Natural killer cell (primary cell): ENCODE measurements at regions of chr2 and their contacts with region 1.

Region 1: DNA sequence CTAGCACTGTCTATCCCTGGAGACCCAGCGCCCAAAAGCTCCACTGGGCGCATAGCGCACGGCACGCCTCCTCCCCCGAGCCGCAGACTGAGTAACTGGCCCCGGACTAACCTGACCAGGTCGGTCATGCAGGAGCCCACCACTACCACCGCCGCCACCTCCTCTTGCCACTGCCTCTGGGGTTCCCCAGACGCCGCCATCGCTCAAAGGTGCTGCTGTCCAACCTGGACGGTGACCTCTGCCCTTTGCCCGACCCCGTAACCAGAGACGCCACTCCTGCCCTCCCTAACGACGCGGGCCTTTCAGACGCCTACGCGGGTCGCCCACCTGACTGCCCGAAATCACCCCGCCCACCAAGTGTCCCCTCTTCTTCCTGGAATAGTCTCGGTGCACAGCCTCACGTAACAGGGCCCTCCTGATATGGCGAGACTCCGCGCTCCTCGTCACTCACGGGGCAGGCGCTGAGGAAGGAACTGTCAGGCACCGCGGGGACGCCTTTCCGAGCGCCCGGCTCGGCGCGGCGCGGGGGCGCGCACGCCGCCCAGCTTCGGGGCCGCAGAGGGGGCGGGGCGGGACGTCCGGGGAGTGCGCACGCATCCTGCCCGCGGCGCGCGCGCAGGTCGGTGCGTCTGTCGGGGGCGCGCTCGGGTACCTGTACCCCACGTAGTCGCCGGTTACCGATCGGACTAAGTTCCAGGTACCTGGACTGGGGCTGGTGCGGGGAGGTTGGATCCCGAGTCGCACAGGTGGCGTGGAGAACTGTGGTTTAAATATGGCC is at the starts of genes BABAM2 and RBKS:
- DNase-seq: peak; percentile 91 to 96
- ATAC-seq: peak; percentile 76 to 90 (median 78)
- H3K4me3 ChIP-seq: peak within 1 kb of the TSS; percentile 87
- H3K4me3 Mint-ChIP-seq: peak within 1 kb of the TSS; percentile 99
- H3K27ac ChIP-seq: peak within 1 kb of the TSS; percentile 100
- H3K27ac Mint-ChIP-seq: peak within 1 kb of the TSS; percentile 100
- H3K4me1 ChIP-seq: peaks cover 17% of the 10 kb centered on the region
- H3K4me1 Mint-ChIP-seq: peaks cover 30 to 41% of the 10 kb centered on the region in 2 donors
- H3K27me3 ChIP-seq: no peaks in the 10 kb centered on the region
- H3K27me3 Mint-ChIP-seq: peaks cover 0 to 4% of the 10 kb centered on the region in 2 donors
- CTCF ChIP-seq: no peak
- total RNA-seq, gene BABAM2: 54.6 to 66.1 (median 59.5) TPM
- total RNA-seq, gene RBKS: 11.5 to 20.9 (median 12.8) TPM

Region 2: DNA sequence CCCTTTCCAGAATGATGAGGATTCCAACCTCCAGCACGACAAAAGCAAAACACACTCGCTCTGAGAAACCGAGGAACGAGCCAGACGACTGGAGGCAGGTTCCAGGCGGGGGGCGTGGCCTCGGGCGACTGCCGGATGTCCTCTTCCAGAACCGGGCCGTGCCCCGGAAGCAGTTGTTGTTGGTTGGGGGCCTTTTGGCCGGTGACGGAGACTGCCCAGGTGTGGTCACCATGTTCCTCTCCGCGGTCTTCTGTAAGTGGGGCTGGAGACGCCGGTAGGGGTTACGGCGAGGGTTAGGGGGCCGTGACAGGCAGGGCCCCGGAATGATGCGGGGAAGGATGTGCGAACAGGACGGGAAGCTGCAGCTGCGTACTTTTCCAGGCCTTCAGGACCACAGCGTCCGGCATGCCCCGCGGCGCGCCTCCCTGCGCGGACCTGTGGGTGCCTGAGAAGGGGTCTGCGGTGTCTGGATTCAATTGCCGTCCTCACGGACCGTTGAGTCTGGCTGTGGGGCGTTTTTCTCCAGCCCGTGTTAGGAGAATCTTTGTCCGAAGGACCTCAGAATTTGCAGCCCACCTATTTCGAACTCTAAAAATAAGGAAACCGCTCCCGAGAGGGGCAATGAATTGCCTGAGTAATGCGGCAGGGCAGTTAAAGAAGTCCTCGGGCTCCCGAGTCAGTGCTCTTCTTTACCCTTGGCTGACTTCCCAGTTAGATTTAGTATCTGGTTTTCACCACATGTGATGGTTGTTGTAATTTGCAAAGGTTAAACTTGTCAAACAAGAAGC is 118.6 kb before region 1 on chr2 and contains the start of gene MRPL33:
- intact Hi-C with region 1: loop called (anchors 1 kb)
- DNase-seq: peak; percentile 87 to 95
- ATAC-seq: peak; percentile 95 to 96 (median 96)
- H3K4me3 ChIP-seq: peak within 1 kb of the TSS; percentile 86
- H3K4me3 Mint-ChIP-seq: peak within 1 kb of the TSS; percentile 99
- H3K27ac ChIP-seq: peak within 1 kb of the TSS; percentile 83
- H3K27ac Mint-ChIP-seq: peak within 1 kb of the TSS; percentile 97 to 99
- H3K4me1 ChIP-seq: peaks cover 11% of the 10 kb centered on the region
- H3K4me1 Mint-ChIP-seq: peaks cover 46 to 48% of the 10 kb centered on the region in 2 donors
- H3K27me3 ChIP-seq: no peaks in the 10 kb centered on the region
- H3K27me3 Mint-ChIP-seq: peaks cover 0 to 9% of the 10 kb centered on the region in 2 donors
- CTCF ChIP-seq: no peak
- total RNA-seq, gene MRPL33: 21.5 to 28.5 (median 27.3) TPM

Region 3: GRCh38 chr2:27920148-27920885 is 30.0 kb after region 1 on chr2:
- intact Hi-C with region 1: loop called (anchors 1 kb)
- DNase-seq: peak in 1 of 2 donors; percentile 78
- ATAC-seq: peak; percentile 96 to 99 (median 98)
- H3K4me3 ChIP-seq: peak overlapping the region; percentile 16
- H3K4me3 Mint-ChIP-seq: peak overlapping the region; percentile 18
- H3K27ac ChIP-seq: peak overlapping the region; percentile 74
- H3K27ac Mint-ChIP-seq: peak overlapping the region; percentile 85 to 94
- H3K4me1 ChIP-seq: no peaks in the 10 kb centered on the region
- H3K4me1 Mint-ChIP-seq: peaks cover 9 to 13% of the 10 kb centered on the region in 2 donors
- H3K27me3 ChIP-seq: no peaks in the 10 kb centered on the region
- H3K27me3 Mint-ChIP-seq: no peaks in the 10 kb centered on the region
- CTCF ChIP-seq: no peak

Region 4: DNA sequence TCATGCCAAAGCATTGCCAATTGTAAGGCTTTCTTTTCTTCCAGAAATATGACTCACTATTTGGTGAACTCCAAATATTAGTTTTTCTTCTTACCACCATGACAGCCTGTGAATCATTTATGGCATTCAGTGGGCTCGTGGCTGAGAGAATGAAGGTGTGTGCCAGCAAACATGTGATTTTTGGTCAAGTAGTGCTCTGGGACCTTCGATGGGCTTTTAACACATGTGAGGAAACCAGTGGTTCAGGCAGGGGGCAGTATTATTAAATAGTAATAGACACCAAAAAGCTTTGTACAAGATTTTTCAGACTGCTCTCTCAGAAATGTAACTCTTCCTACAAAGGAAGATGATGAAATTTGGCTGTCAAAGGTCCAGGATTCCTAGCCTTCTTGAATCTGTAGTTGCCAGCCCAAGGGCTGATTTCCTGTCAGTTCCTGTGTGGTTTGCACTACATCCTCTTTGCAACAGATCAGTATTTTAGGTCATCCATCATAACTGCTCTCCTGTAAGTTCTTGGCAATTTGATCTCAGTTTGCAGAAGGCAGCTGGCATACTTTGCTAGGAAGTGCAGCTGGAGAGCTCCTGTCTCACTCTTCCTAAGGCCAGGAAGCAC is 64.5 kb after region 1 on chr2:
- intact Hi-C with region 1: loop called (anchors 1 kb)
- DNase-seq: peak in 1 of 2 donors; percentile 60
- ATAC-seq: peak; percentile 74 to 89 (median 83)
- H3K4me3 ChIP-seq: no peak overlapping the region
- H3K4me3 Mint-ChIP-seq: peak overlapping the region; percentile 62
- H3K27ac ChIP-seq: peak overlapping the region; percentile 59
- H3K27ac Mint-ChIP-seq: peak overlapping the region; percentile 44 to 76
- H3K4me1 ChIP-seq: peaks cover 15% of the 10 kb centered on the region
- H3K4me1 Mint-ChIP-seq: peaks cover 55 to 80% of the 10 kb centered on the region in 2 donors
- H3K27me3 ChIP-seq: no peaks in the 10 kb centered on the region
- H3K27me3 Mint-ChIP-seq: no peaks in the 10 kb centered on the region
- CTCF ChIP-seq: no peak